Common myeloid progenitor, CD34-positive (primary cell): ENCODE measurements at regions of chr11 and their contacts with region 1.

Region 1: DNA sequence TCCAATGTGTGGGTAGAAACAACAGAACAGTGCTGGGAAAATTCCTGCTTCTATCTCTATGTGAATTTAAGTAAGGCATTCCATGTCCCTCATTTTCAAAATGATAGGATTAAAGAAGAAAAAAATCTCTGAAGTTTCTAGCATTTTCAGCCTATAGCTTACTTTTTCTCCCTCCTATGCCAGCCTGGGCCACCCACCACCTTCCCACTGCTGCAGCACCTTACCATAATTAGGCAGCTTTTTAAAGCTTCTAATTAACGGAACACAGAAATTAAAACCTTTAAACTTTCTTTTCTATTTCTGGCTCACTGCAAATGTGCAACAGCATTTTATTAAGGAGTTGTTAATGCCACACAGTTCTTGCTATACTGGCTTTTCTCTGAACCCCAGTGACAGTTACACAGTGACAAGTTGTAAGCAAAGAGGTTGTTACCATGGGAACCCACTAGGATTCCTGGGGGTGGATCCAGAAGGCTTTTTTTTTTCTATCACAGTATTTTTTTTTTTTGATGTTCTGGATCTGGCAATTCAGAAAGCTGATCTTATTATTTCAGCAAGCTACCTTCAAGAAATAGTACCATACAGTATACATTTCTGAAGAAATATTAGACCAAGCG is 20.2 kb downstream of the CELF1 start:
- DNase-seq: peak; percentile 32 to 83 (median 81)
- H3K4me3 ChIP-seq: no peak overlapping the region
- H3K27ac ChIP-seq: peak overlapping the region; percentile 62 to 80
- H3K4me1 ChIP-seq: peaks cover 0 to 15% (median 6%) of the 10 kb centered on the region in 4 experiments
- H3K27me3 ChIP-seq: no peaks in the 10 kb centered on the region

Region 2: DNA sequence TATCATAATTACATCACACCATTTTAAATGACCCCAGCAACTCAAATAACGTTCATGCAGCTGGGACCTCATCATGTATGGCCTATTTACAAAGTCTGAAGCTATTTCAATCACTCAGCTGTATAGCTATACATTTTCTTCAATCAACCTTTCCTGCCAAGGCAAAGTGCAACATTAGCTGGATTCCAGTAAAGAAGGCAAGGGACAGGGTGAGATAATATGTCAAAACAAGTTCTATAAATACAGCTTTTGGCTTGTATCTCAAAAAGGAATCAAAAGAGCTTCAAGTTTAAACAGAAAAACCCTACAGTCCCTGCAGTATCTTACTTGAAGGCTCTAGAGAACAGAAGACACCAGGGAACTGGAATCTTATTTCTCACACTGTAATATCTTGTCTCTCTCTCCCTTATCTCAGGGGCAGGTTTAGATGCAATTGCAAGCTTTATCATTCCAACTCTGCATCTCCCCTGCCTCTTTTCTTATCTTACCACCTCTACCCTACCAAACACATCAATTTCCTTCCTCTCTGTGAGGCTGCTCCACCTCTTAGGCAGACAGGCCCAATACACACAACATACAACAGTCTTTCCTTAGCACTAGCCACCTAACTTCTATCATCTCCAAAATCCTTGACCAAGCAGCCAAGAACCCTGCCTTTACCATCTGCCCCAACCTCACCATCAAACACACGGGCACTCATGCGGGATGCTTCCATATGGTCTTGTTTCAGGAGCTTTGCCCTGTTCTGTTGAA is 14.3 kb before region 1 on chr11:
- CTCF ChIA-PET with region 1: interaction called, 20 read pairs
- POLR2A ChIA-PET with region 1: interaction called, 4 read pairs
- DNase-seq: peak; percentile 34 to 62 (median 46)
- H3K4me3 ChIP-seq: peak overlapping the region in 4 of 7 experiments; percentile 13 to 42 (median 34)
- H3K27ac ChIP-seq: peak overlapping the region; percentile 55 to 85
- H3K4me1 ChIP-seq: peaks cover 39 to 82% (median 62%) of the 10 kb centered on the region in 4 experiments
- H3K27me3 ChIP-seq: no peaks in the 10 kb centered on the region